Dorsolateral prefrontal cortex (tissue), 120 donors: ENCODE measurements at regions of chr1 and their contacts with region 1.

Region 1: GRCh38 chr1:114581335-114582287 is at the start of gene BCAS2:
- DNase-seq: peak; percentile 92 to 99 (median 96)
- H3K4me3 ChIP-seq: peak within 1 kb of the TSS; percentile 50 to 99 (median 80)
- H3K27ac ChIP-seq: peak within 1 kb of the TSS; percentile 57 to 98 (median 91)
- H3K27me3 ChIP-seq: no peaks in the 10 kb centered on the region
- CTCF ChIP-seq: peak in 22 of 56 donors; percentile 5 to 32 (median 18)
- total RNA-seq, gene BCAS2: 20.3 to 90.8 (median 49.2) TPM

Region 2: GRCh38 chr1:114627107-114627506 is 45.5 kb after region 1 on chr1:
- intact Hi-C with region 1: no loop called
- DNase-seq: no peak
- H3K4me3 ChIP-seq: no peak overlapping the region
- H3K27ac ChIP-seq: no peak overlapping the region
- H3K27me3 ChIP-seq: peaks cover 0 to 6% (median 0%) of the 10 kb centered on the region in 45 donors
- CTCF ChIP-seq: no peak

Region 3: DNA sequence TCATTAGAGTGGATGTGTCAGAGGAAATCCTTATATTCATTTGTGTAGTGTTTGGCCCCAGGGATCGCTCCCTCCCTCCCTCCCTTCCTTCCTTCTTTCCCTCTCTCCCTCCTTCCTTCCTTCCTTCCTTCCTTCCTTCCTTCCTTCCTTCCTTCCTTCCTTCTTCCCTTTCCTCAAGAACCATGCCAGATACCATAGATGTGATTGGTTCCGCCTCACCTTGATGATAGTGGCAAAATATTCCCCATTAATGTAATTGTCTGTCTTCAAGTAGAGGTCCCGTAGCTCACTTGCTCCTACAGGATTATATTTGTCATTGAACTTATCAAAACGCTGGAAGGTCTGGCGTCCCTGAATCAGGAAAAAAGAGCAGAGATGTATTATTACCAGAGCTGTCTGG is 96.1 kb after region 1 on chr1:
- intact Hi-C with region 1: loop called in 1 of 2 experiments (anchors 5 kb)
- DNase-seq: no peak
- H3K4me3 ChIP-seq: no peak overlapping the region
- H3K27ac ChIP-seq: no peak overlapping the region
- H3K27me3 ChIP-seq: peaks cover 0 to 5% (median 0%) of the 10 kb centered on the region in 45 donors
- CTCF ChIP-seq: no peak

Region 4: GRCh38 chr1:114716304-114717170 is 134.9 kb after region 1 on chr1 and contains the start of gene NRAS:
- intact Hi-C with region 1: loop called (anchors 2 to 5 kb)
- DNase-seq: peak; percentile 75 to 96 (median 93)
- H3K4me3 ChIP-seq: peak within 1 kb of the TSS; percentile 64 to 100 (median 91)
- H3K27ac ChIP-seq: peak within 1 kb of the TSS in 56 of 59 donors; percentile 20 to 94 (median 80)
- H3K27me3 ChIP-seq: no peaks in the 10 kb centered on the region
- CTCF ChIP-seq: peak in 29 of 56 donors; percentile 5 to 44 (median 22)
- total RNA-seq, gene NRAS: 10.6 to 20.9 (median 16.0) TPM

Region 5: GRCh38 chr1:114757455-114758250 is 176.0 kb after region 1 on chr1 and contains the start of gene CSDE1:
- intact Hi-C with region 1: loop called (anchors 5 to 10 kb)
- DNase-seq: peak; percentile 93 to 98 (median 96)
- H3K4me3 ChIP-seq: peak within 1 kb of the TSS; percentile 66 to 100 (median 95)
- H3K27ac ChIP-seq: peak within 1 kb of the TSS; percentile 95 to 100 (median 99)
- H3K27me3 ChIP-seq: no peaks in the 10 kb centered on the region
- CTCF ChIP-seq: peak in 41 of 56 donors; percentile 3 to 50 (median 27)
- total RNA-seq, gene CSDE1: 340 to 487 (median 404) TPM

Region 6: GRCh38 chr1:114780344-114781226 is 199.0 kb after region 1 on chr1 and contains the start of gene SIKE1:
- intact Hi-C with region 1: loop called in 1 of 2 experiments (anchors 10 kb)
- DNase-seq: peak; percentile 84 to 97 (median 94)
- H3K4me3 ChIP-seq: peak within 1 kb of the TSS; percentile 53 to 99 (median 89)
- H3K27ac ChIP-seq: peak within 1 kb of the TSS; percentile 13 to 94 (median 79)
- H3K27me3 ChIP-seq: peaks cover 0 to 6% (median 0%) of the 10 kb centered on the region in 45 donors
- CTCF ChIP-seq: peak in 28 of 56 donors; percentile 10 to 47 (median 28)
- total RNA-seq, gene SIKE1: 19.8 to 45.5 (median 30.5) TPM